Cardiac septum (tissue), 1 donor: ENCODE measurements at regions of chr12 and their contacts with region 1.

Region 1: DNA sequence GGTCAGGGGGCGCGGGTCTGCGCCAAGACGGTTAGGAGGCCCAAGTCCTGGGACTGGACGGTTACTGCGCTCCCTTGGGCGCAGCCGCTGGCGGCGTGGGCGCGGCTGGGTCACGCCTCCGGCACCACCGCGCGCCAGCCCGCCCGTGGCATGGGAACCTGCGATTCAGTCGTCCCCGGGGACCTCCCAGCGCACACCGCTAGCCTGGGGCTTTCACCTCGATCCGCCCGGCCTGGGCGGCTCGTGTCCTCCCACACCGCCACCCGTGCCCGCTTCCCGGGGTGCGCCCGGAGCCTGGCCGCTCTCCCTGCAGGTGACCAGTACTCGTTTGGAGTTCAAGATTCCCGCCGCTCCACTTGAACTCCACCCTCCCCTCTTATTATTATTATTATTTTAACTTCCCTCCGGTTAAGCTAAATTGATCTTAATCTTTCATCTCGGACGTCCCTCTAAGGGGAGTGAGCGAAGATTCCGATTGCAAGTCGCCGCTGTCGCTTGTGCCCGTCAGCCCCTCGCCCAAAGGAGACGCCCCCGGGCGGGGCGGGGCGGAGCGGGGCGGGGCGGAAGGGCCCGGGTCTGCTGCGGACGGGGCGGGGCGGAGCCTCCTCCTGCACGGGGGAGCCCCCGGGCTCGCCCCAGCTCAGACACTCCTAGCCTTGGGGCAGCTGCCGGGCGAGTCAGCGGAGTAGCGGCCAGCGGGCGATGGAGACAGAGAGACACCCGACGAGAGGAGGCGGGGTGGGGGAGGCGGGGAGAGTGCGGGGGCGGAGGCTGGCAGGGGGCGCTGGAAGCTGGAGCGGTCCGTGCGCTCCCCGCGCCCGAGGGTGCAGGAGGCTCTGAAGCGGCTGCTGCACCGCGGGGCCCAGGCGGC is at the start of gene KCNMB4:
- DNase-seq: peak; percentile 78
- total RNA-seq, gene KCNMB4: 1.6 TPM

Region 2: DNA sequence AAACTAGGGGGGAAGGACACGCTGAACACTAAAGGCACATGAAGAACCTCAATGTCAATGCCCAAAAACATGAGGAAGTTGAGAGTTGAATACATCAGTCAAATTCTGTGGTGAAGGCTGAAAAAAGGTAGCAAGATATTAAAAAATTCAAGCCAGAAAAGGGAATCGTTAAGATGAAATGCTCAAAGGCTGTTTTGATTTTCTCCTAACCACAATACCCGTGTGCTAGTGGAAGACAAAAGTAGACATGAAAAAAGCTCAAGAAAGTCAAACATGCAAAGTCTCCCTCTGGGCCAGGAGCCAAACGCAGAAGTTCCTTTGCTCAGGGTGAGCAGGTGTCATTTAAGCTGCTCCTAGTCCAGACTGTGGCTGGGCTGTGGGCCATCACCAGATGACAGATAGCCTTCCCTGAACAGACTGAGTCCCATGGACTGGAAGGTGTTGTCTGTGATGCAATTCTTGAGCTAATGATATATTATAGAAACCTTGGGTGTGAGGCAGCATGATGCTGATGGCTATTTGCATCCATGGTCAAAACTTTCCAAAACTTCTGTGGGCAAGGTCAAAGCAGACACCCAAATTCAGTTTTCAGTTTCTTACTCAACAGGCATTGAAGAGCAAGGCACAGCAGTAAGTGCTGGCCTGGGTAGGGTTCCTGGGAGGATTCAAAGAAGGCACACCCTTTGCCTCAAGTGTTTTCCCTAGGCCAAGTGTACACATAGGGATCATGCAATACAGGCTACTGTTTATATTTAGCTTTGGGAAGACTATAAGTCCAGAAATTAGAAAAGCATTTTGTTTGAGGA is 459.3 kb before region 1 on chr12:
- intact Hi-C with region 1: loop called (anchors 5 kb)
- DNase-seq: no peak

Region 3: DNA sequence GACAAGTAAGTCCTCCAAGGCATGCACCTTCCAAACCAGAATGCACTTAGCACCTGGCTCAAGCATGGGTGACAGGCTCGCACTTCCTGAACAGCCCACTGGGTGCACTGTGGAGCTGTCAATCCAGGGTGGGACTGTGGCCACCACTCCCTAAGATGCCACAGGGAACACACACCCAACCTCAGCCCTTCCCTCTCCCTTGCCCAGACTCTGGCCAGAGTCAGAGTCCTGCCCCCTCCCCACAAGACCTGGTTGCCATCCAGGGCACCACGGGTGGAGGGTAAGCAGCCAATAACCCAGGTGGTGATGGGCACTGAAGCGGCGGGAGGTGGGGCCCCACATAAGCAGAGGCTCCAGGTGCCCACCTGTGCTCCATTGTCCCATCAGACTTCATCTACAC is 380.2 kb before region 1 on chr12:
- intact Hi-C with region 1: loop called (anchors 10 kb)
- DNase-seq: no peak

Region 4: DNA sequence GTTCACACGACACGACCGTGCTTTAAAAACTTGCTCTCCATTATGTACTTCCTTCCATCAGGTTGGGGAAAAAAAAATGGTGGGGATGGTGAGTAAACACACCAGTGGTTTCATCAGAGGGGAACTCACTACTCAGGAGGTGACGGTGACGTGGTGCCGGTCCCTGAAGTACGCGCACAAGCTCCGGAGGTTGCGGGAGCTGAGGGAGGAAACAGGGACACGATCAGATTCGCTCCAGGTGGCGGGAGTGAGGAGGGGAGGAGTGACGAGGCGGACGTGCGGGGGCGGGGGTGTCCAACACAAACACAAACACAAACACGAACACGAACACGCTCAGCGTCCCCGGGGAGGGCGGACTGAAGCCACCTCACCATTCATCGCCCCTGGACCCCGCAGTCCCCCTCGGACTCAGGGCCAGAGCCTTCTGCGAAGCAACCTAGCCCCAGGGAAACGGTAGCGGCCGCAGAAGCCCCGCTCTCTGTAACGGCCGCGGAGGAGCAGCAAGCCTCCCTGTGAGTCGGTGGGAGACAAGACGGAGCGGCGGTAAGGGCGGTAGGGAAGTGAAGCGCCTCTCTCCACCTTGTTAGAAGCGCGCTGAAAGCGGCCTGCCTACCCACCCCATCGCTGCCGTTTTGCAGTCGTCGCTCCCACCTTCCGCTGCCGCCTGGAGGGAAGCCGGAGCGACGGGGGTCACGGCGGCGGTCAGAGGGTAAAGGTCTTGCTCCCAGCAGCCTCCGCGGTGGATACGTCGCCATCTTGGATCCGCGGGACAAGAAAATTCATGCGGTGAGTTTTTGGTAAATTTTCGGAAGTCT is 123.0 kb before region 1 on chr12 and contains the start of gene CNOT2:
- intact Hi-C with region 1: loop called (anchors 5 kb)
- DNase-seq: peak; percentile 93
- total RNA-seq, gene CNOT2: 44.0 TPM

Region 5: DNA sequence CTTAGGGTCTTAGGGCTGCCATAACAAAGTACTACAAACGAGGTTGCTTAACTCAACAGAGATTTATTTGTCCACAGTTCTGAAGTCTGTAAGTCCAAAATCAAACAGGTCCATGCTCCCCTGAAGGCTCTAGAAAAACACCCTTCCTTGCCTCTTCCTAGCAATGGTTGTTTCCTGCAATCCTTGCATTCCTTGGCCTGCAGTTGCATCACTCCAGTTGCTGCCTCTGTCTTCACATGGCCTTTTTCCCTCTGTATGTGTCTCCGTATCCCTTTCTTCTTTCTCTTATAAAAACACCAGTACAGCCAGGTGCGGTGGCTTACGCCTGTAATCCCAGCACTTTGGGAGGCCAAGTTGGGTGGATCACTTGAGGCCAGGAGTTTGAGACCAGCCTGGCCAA is 17.6 kb after region 1 on chr12:
- intact Hi-C with region 1: no loop called
- DNase-seq: no peak